ENCODE measurements at regions of chr12 and their contacts with region 1.

Region 1: DNA sequence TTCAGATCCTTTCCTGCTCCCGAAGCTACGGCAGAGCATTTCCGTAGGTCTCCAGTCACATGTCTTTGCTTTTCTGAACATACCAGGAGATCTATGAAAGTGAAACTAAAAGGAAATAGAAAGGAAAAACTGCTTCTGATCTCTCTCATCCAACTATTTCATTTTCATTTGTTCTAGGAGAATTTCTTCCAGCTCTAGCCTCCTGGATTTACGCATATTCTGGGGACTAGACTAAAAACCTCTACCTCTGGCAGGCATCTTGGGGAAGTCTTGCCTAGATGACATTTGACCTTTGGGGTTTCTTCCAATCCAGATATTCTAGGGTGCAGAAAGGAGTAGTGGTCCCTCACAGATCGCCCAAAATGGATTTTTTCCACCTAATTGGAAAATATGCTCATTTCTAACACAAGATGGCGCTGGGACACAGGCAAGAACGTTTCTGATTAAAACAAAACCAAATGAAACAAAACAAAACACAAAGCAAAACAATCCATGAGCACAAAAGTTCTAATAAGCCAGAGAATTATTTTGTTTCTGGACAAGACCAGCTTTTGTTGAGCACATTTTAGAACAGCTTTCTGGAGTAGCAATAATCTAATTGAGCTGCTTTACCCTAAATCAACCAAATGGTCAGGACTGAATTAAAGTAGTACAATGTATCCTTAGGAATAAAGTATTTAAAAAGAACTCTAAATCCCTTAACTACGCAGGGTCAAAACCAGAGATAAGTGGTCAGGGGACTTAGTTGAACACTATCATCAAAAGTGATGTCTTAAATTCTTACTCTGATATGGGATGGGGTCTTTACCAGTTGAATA is 12.3 kb upstream of the PARP11 start:
- DNase-seq: peak; percentile 47
- H3K4me3 Mint-ChIP-seq: peak overlapping the region; percentile 59
- H3K27ac Mint-ChIP-seq: peak overlapping the region; percentile 63
- H3K4me1 Mint-ChIP-seq: peaks cover 6% of the 10 kb centered on the region
- H3K27me3 Mint-ChIP-seq: peaks cover 20% of the 10 kb centered on the region
- CTCF ChIP-seq: peak; percentile 83

Region 2: GRCh38 chr12:3832738-3833137 is 52.7 kb before region 1 on chr12:
- CTCF ChIA-PET with region 1: no interaction called
- POLR2A ChIA-PET with region 1: no interaction called
- intact Hi-C with region 1: no loop called
- DNase-seq: no peak
- H3K4me3 Mint-ChIP-seq: no peak overlapping the region
- H3K27ac Mint-ChIP-seq: no peak overlapping the region
- H3K4me1 Mint-ChIP-seq: no peaks in the 10 kb centered on the region
- H3K27me3 Mint-ChIP-seq: no peaks in the 10 kb centered on the region
- CTCF ChIP-seq: no peak

Region 3: DNA sequence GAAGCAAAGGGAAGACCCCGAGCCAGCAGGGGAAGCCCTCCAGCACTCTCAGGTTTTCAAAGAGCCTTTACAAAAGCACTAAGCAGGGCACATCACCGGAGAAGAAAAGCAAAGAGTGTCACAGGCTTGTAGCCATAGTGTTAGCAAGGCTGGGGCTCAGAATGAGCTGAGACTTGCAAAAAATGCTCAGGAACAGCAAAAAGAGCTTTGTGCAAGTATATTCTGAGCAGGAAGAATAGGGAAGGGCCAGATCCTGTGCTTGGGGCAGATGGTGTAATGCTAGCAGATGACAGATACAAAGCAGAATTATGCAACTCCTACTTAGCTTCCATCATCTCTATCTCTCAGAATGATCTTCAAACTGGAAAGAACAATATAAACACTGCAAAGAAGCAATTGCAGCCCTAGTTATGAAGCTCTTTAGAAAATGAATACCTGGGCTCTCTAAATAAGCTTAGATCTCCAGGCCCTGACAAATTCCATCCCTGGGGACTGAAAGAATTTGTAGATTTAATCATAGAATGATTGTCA is 11.4 kb after region 1 on chr12:
- CTCF ChIA-PET with region 1: interaction called, 45 read pairs
- POLR2A ChIA-PET with region 1: interaction called, 22 read pairs
- intact Hi-C with region 1: no loop called
- DNase-seq: no peak
- H3K4me3 Mint-ChIP-seq: no peak overlapping the region
- H3K27ac Mint-ChIP-seq: no peak overlapping the region
- H3K4me1 Mint-ChIP-seq: peaks cover 8% of the 10 kb centered on the region
- H3K27me3 Mint-ChIP-seq: peaks cover 13% of the 10 kb centered on the region
- CTCF ChIP-seq: no peak

Region 4: DNA sequence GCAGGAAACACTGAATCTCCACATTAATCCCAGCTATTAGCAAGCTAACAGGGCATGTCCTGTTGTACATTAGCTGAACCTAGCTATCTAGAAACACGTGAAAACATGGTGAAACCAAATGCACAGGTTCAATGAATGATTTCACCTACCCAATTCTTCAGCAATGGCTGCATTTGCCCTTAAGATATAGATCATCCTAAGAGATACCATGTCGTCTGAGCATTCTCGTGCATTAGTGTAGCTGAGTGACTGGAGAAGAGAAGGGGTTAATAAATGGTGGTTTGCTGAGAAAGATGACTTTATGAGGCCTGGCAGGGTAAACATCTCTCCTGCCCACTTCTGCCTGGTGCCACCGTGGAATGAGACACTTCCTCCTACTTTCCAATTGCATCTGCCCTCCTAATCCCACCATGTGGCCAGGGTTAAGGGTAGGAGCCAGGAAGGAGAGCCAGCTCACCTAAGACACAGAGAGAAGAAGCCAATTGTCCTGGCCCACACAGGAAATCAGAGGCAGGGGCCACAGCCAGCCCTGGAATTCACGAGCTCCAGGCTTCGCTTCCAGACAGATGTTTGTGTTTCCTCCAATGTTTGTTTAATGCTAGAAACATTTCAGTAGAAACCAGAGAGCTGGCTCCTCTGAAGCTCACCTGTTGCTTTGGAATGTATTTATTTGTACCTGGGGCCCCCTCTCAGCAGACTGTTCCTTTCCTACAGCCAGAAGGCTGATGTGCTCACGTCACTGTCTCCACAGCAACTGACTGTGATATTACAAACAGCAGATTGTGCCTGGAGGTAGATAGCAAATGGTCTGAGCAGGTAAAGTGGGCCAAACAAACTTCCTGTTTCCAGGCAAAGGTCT is 113.7 kb after region 1 on chr12:
- CTCF ChIA-PET with region 1: interaction called, 146 read pairs
- POLR2A ChIA-PET with region 1: interaction called, 4 read pairs
- intact Hi-C with region 1: loop called (anchors 2 kb)
- DNase-seq: peak; percentile 78
- H3K4me3 Mint-ChIP-seq: no peak overlapping the region
- H3K27ac Mint-ChIP-seq: peak overlapping the region; percentile 86
- H3K4me1 Mint-ChIP-seq: peaks cover 12% of the 10 kb centered on the region
- H3K27me3 Mint-ChIP-seq: peaks cover 8% of the 10 kb centered on the region
- CTCF ChIP-seq: no peak

Region 5: GRCh38 chr12:4044736-4045730 is 159.5 kb after region 1 on chr12:
- CTCF ChIA-PET with region 1: interaction called, 220 read pairs
- POLR2A ChIA-PET with region 1: no interaction called
- intact Hi-C with region 1: no loop called
- DNase-seq: no peak
- H3K4me3 Mint-ChIP-seq: no peak overlapping the region
- H3K27ac Mint-ChIP-seq: no peak overlapping the region
- H3K4me1 Mint-ChIP-seq: no peaks in the 10 kb centered on the region
- H3K27me3 Mint-ChIP-seq: peaks cover 33% of the 10 kb centered on the region
- CTCF ChIP-seq: no peak

Region 6: GRCh38 chr12:4091016-4091743 is 205.7 kb after region 1 on chr12:
- CTCF ChIA-PET with region 1: no interaction called
- POLR2A ChIA-PET with region 1: no interaction called
- intact Hi-C with region 1: no loop called
- DNase-seq: no peak
- H3K4me3 Mint-ChIP-seq: no peak overlapping the region
- H3K27ac Mint-ChIP-seq: no peak overlapping the region
- H3K4me1 Mint-ChIP-seq: no peaks in the 10 kb centered on the region
- H3K27me3 Mint-ChIP-seq: peaks cover 56% of the 10 kb centered on the region
- CTCF ChIP-seq: no peak

Region 7: DNA sequence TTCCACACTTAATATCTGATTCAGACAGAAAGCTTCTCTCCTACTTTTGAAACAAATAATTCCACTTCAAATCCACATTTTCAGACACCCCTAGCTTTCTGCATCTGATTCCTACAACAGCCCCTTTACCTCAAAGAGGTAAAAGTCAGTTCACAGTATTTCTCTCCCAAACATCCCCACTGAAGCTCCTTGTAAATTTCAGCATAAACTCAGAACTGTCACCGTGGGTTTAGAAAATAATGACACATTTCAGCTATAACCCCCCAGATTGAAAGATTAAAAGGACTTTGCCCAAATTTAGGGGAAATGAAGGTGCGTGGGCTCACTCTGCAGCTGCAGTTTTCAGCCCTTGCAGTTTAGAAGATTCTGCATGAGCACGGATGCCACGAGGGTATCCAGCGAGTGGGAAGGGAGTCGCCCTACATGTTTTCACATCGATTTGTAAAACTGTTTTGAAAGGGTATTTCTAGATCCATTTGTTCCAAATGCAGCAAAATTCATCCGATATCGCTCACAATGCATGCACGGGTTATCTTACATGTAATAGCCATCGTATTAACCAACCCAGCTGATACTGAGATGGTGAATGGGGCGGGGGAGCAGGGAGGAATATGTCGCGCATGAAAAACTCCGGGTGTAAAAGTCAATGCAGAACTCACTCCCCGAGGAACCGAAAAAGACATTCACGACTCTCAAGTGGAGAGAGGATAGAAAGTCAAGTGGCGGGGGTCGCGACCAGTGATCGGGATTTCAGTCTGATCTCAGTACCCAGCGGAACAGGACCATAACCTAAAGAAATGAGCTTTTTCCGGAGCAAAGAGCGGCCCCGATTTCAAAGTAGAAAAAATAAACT is 383.1 kb after region 1 on chr12:
- CTCF ChIA-PET with region 1: interaction called, 19 read pairs
- POLR2A ChIA-PET with region 1: interaction called, 3 read pairs
- intact Hi-C with region 1: no loop called
- DNase-seq: no peak
- H3K4me3 Mint-ChIP-seq: peak overlapping the region; percentile 29
- H3K27ac Mint-ChIP-seq: no peak overlapping the region
- H3K4me1 Mint-ChIP-seq: peaks cover 12% of the 10 kb centered on the region
- H3K27me3 Mint-ChIP-seq: peaks cover 99% of the 10 kb centered on the region
- CTCF ChIP-seq: no peak